IMR-90 (cell line): ENCODE measurements at regions of chr10 and their contacts with region 1.

Region 1: GRCh38 chr10:99042051-99042771 is 193.4 kb downstream of the HPSE2 start:
- DNase-seq: no peak
- ATAC-seq: no peak
- H3K4me3 ChIP-seq: no peak overlapping the region
- H3K27ac ChIP-seq: no peak overlapping the region
- H3K4me1 ChIP-seq: no peaks in the 10 kb centered on the region
- H3K27me3 ChIP-seq: no peaks in the 10 kb centered on the region
- CTCF ChIP-seq: no peak
- POLR2A ChIP-seq: no peak
- RAD21 ChIP-seq: no peak

Region 2: GRCh38 chr10:98748298-98748697 is 293.9 kb before region 1 on chr10:
- CTCF ChIA-PET with region 1: no interaction called
- POLR2A ChIA-PET with region 1: no interaction called
- dilution Hi-C with region 1: no loop called
- in situ Hi-C with region 1: no loop called
- intact Hi-C with region 1: loop called (anchors 1 kb)
- DNase-seq: peak; percentile 38
- ATAC-seq: no peak
- H3K4me3 ChIP-seq: no peak overlapping the region
- H3K27ac ChIP-seq: no peak overlapping the region
- H3K4me1 ChIP-seq: no peaks in the 10 kb centered on the region
- H3K27me3 ChIP-seq: no peaks in the 10 kb centered on the region
- CTCF ChIP-seq: peak; percentile 42
- POLR2A ChIP-seq: no peak
- RAD21 ChIP-seq: peak; percentile 20; the same call in 1 of the 2 replicates

Region 3: GRCh38 chr10:98790802-98791201 is 251.4 kb before region 1 on chr10:
- CTCF ChIA-PET with region 1: no interaction called
- POLR2A ChIA-PET with region 1: no interaction called
- dilution Hi-C with region 1: no loop called
- in situ Hi-C with region 1: no loop called
- intact Hi-C with region 1: loop called (anchors 5 kb)
- DNase-seq: peak; percentile 12
- ATAC-seq: peak; percentile 53
- H3K4me3 ChIP-seq: no peak overlapping the region
- H3K27ac ChIP-seq: no peak overlapping the region
- H3K4me1 ChIP-seq: no peaks in the 10 kb centered on the region
- H3K27me3 ChIP-seq: no peaks in the 10 kb centered on the region
- CTCF ChIP-seq: peak; percentile 29
- POLR2A ChIP-seq: no peak
- RAD21 ChIP-seq: peak; percentile 29; the same call in 1 of the 2 replicates

Region 4: DNA sequence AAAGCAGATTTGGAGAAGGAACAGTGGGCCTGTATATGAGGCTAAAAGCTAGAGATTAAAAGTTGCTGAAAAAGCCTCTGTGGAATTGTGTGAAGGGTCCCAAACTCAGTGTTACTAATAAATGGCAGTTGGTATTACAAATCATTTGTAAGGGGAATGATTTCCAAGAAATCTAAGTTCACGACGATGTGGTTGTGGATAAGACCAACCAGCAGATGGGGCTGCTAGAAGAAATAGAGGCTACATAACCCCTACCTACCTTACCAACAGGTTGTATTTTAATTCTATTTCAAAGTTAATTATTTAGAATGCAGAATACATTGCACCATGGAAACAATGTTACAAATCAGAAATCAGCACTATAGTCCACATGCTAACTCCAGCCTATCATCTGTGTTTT is 183.7 kb before region 1 on chr10:
- CTCF ChIA-PET with region 1: no interaction called
- POLR2A ChIA-PET with region 1: no interaction called
- dilution Hi-C with region 1: no loop called
- in situ Hi-C with region 1: no loop called
- intact Hi-C with region 1: loop called (anchors 5 kb)
- DNase-seq: peak; percentile 12
- ATAC-seq: no peak
- H3K4me3 ChIP-seq: no peak overlapping the region
- H3K27ac ChIP-seq: no peak overlapping the region
- H3K4me1 ChIP-seq: no peaks in the 10 kb centered on the region
- H3K27me3 ChIP-seq: no peaks in the 10 kb centered on the region
- CTCF ChIP-seq: 0 out of 2 replicates have a peak, but pooled peaks have one; percentile 9
- POLR2A ChIP-seq: no peak
- RAD21 ChIP-seq: no peak

Region 5: GRCh38 chr10:100065084-100065660 is 1023.0 kb after region 1 on chr10:
- CTCF ChIA-PET with region 1: no interaction called
- POLR2A ChIA-PET with region 1: no interaction called
- dilution Hi-C with region 1: no loop called
- in situ Hi-C with region 1: no loop called
- intact Hi-C with region 1: no loop called
- DNase-seq: no peak
- ATAC-seq: no peak
- H3K4me3 ChIP-seq: no peak overlapping the region
- H3K27ac ChIP-seq: no peak overlapping the region
- H3K4me1 ChIP-seq: no peaks in the 10 kb centered on the region
- H3K27me3 ChIP-seq: peaks cover 8% of the 10 kb centered on the region
- CTCF ChIP-seq: no peak
- POLR2A ChIP-seq: no peak
- RAD21 ChIP-seq: no peak